HepG2 (cell line): ENCODE measurements at regions of chr16 and their contacts with region 1.

Region 1: GRCh38 chr16:31032736-31033708 is at the start of gene STX4:
- DNase-seq: peak; percentile 94
- ATAC-seq: peak; percentile 88
- H3K4me3 ChIP-seq: peak within 1 kb of the TSS; percentile 86 to 99 (median 94)
- H3K27ac ChIP-seq: peak within 1 kb of the TSS; percentile 82
- H3K4me1 ChIP-seq: peaks cover 39% of the 10 kb centered on the region
- H3K27me3 ChIP-seq: no peaks in the 10 kb centered on the region; a peak in 1 of 5 replicates
- CTCF ChIP-seq: peak; percentile 16; the same call in 1 of the 2 replicates
- EP300 ChIP-seq: no peak
- POLR2A ChIP-seq: peak; percentile 60 to 75; a peak in 2 of 4 replicates
- RAD21 ChIP-seq: no peak
- total RNA-seq, gene STX4: 29.2 and 31.3 TPM in 2 replicates

Region 2: GRCh38 chr16:31050280-31051030 is 17.4 kb after region 1 on chr16:
- CTCF ChIA-PET with region 1: no interaction called
- POLR2A ChIA-PET with region 1: interaction called, 17 read pairs
- in situ Hi-C with region 1: no loop called
- intact Hi-C with region 1: no loop called
- DNase-seq: no peak
- ATAC-seq: peak; percentile 33
- H3K4me3 ChIP-seq: no peak overlapping the region
- H3K27ac ChIP-seq: no peak overlapping the region
- H3K4me1 ChIP-seq: peaks cover 23% of the 10 kb centered on the region
- H3K27me3 ChIP-seq: peaks cover 0 to 3% of the 10 kb centered on the region in 2 experiments; a peak in 1 of 5 replicates
- CTCF ChIP-seq: no peak
- EP300 ChIP-seq: no peak
- POLR2A ChIP-seq: no peak
- RAD21 ChIP-seq: no peak